ENCODE measurements at regions of chr20 and their contacts with region 1.

Region 1: DNA sequence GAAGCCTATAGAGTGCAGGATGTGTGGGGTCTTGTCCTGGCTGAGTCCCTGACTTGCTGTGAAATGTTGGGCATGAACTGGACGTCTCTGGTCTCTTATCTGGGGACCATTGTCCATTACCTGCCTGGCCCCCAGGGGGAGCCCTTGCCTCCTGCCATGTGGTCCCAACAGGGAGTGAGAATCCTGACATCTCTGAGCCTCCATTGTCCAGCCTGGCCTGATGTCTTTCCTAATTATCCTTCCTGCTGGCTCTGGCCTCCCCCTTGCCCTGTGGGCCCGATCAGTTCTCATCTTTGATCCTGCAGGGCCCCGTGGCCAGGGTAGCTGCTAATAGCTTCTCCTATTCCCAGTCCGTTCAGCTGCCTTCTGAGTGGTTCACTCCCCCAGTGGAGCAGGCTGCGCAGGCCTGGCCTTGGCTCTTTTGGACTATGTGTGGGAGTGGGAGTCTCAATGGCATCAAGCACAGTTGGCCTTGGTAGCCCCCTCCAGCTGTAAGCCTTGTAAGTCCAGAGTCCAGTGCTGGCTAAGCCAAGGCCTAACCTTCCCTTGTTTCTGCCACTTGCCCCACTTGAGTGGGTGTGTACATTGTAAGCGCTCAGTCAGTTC is 77.9 kb upstream of the RALY start:
- DNase-seq: peak; percentile 20
- H3K4me3 Mint-ChIP-seq: no peak overlapping the region
- H3K27ac Mint-ChIP-seq: no peak overlapping the region
- H3K4me1 Mint-ChIP-seq: peaks cover 5% of the 10 kb centered on the region
- H3K27me3 Mint-ChIP-seq: peaks cover 13% of the 10 kb centered on the region

Region 2: GRCh38 chr20:33791959-33792597 is 123.8 kb before region 1 on chr20:
- intact Hi-C with region 1: loop called (anchors 5 kb)
- DNase-seq: peak; percentile 30
- H3K4me3 Mint-ChIP-seq: no peak overlapping the region
- H3K27ac Mint-ChIP-seq: no peak overlapping the region
- H3K4me1 Mint-ChIP-seq: peaks cover 22% of the 10 kb centered on the region
- H3K27me3 Mint-ChIP-seq: no peaks in the 10 kb centered on the region

Region 3: DNA sequence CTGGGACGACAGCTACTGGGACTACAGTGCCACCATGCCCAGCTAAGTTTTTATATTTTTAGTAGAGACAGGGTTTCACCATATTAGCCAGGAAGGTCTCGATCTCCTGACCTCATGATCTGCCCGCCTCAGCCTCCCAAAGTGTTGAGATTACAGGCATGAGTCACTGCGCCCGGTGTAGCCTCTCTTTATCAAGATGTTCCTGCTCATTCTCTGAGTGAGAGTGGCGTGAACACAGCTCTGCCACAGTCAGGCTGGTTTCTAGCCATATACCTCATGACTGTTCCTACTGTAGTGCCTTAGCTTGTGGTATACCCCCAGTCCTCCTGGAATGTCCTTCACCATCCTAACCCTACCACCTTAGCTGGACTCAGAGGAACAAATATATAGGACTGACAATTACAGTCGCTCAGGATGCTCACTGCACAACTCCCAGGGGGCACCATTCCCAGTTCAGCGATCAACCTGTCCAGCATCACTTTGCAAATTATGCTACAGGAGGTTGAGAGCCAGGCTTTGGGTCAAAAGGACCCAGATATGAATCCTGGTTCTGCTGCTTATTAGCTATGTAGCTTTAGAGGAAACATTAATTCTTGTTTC is 18.4 kb before region 1 on chr20:
- intact Hi-C with region 1: no loop called
- DNase-seq: no peak
- H3K4me3 Mint-ChIP-seq: no peak overlapping the region
- H3K27ac Mint-ChIP-seq: no peak overlapping the region
- H3K4me1 Mint-ChIP-seq: no peaks in the 10 kb centered on the region
- H3K27me3 Mint-ChIP-seq: peaks cover 9% of the 10 kb centered on the region

Region 4: GRCh38 chr20:34834459-34834893 is 918.6 kb after region 1 on chr20:
- intact Hi-C with region 1: no loop called
- DNase-seq: no peak
- H3K4me3 Mint-ChIP-seq: no peak overlapping the region
- H3K27ac Mint-ChIP-seq: no peak overlapping the region
- H3K4me1 Mint-ChIP-seq: no peaks in the 10 kb centered on the region
- H3K27me3 Mint-ChIP-seq: peaks cover 27% of the 10 kb centered on the region

Measured in activated T-helper 1 cell treated with anti-CD3 and anti-CD28 coated beads, Interleukin-12 subunit alpha, Interleukin-12 subunit beta, Interleukin-2, Interleukin-4 antibody, amounts not matched to agents 30 ng/mL and 10 ng/mL and 1 ng/mL, durations not matched to agents 14 hours and 24 hours and 36 hours (primary cell).